ENCODE measurements at regions of chr1 and their contacts with region 1.

Region 1: DNA sequence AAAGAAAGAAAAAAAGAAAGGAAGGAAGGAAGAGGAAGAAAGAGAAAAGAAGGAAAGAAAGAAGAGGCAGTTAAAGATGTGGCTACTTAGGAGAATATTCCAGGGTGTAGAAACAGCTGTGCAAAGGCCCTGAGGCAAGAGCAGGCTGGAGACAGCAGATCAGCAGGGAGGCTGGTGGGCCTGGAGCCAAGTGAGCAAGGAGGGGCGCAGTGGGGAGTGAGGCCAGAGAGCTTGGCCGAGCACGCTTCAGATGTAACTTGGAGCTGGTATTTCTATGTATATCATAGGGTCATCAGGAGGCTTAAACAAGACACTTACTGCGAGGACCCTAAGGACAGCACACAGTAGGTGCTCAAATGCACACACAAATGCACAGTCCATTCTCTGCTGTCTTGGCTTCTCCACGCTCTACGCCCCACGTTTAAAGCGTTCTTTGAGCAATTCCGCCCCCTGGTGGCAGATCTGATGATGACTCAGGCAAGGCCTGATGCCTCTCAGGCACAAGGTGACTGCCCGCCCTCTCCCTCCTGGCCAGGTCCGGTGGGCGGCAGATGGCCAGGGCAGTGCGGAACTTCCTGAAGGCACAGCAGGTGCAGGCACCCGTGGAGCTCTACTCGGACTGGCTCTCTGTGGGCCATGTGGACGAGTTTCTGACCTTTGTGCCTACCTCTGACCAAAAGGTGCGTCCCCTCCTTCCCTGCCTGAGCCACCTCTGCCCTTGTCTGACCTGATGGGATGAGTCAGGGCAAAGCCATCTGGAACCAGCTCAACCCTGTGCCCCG is 11.9 kb upstream of the PADI3 start:
- H3K4me3 ChIP-seq: no peak overlapping the region
- H3K27ac ChIP-seq: no peak overlapping the region
- H3K4me1 ChIP-seq: peaks cover 14% of the 10 kb centered on the region
- CTCF ChIP-seq: peak; percentile 95

Region 2: GRCh38 chr1:17197696-17198095 is 39.3 kb before region 1 on chr1:
- CTCF ChIA-PET with region 1: no interaction called
- POLR2A ChIA-PET with region 1: no interaction called
- H3K4me3 ChIP-seq: no peak overlapping the region
- H3K27ac ChIP-seq: no peak overlapping the region
- H3K4me1 ChIP-seq: no peaks in the 10 kb centered on the region
- CTCF ChIP-seq: no peak

Region 3: GRCh38 chr1:17207966-17208418 is 29.0 kb before region 1 on chr1:
- CTCF ChIA-PET with region 1: interaction called, 9 read pairs
- POLR2A ChIA-PET with region 1: interaction called, 12 read pairs
- H3K4me3 ChIP-seq: no peak overlapping the region
- H3K27ac ChIP-seq: no peak overlapping the region
- H3K4me1 ChIP-seq: peaks cover 4% of the 10 kb centered on the region
- CTCF ChIP-seq: no peak

Region 4: DNA sequence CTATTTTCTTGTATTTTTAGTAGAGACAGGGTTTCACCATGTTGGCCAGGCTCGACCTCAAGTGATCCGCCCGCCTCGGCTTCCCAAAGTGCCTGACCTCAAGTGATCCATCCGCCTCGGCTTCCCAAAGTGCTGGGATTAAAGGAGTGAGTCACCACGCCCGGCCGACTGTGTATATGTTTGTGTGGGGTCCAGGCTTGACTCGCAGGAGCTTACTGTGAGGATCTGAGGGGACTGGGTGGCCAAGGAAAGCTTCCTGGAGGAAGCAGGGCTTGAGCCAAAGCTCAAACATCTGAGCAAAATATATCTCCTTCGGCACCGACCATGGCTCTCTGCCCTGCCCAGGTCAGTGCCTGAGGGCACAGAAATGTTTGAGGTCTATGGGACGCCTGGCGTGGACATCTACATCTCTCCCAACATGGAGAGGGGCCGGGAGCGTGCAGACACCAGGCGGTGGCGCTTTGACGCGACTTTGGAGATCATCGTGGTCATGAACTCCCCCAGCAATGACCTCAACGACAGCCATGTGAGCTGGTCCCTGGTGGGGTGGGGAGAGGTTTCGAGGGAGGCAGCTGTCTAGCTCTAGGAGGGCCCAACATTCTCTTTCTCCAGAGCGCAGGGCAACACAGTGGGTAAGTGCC is 22.4 kb after region 1 on chr1:
- CTCF ChIA-PET with region 1: interaction called, 13 read pairs
- POLR2A ChIA-PET with region 1: no interaction called
- H3K4me3 ChIP-seq: no peak overlapping the region
- H3K27ac ChIP-seq: no peak overlapping the region
- H3K4me1 ChIP-seq: no peaks in the 10 kb centered on the region
- CTCF ChIP-seq: no peak

Region 5: GRCh38 chr1:17274186-17275170 is 37.5 kb after region 1 on chr1:
- CTCF ChIA-PET with region 1: interaction called, 10 read pairs
- POLR2A ChIA-PET with region 1: no interaction called
- H3K4me3 ChIP-seq: no peak overlapping the region
- H3K27ac ChIP-seq: no peak overlapping the region
- H3K4me1 ChIP-seq: no peaks in the 10 kb centered on the region
- CTCF ChIP-seq: peak; percentile 75

Region 6: GRCh38 chr1:17304151-17304825 is 67.3 kb after region 1 on chr1:
- CTCF ChIA-PET with region 1: no interaction called
- POLR2A ChIA-PET with region 1: no interaction called
- H3K4me3 ChIP-seq: no peak overlapping the region
- H3K27ac ChIP-seq: no peak overlapping the region
- H3K4me1 ChIP-seq: no peaks in the 10 kb centered on the region
- CTCF ChIP-seq: no peak

Region 7: DNA sequence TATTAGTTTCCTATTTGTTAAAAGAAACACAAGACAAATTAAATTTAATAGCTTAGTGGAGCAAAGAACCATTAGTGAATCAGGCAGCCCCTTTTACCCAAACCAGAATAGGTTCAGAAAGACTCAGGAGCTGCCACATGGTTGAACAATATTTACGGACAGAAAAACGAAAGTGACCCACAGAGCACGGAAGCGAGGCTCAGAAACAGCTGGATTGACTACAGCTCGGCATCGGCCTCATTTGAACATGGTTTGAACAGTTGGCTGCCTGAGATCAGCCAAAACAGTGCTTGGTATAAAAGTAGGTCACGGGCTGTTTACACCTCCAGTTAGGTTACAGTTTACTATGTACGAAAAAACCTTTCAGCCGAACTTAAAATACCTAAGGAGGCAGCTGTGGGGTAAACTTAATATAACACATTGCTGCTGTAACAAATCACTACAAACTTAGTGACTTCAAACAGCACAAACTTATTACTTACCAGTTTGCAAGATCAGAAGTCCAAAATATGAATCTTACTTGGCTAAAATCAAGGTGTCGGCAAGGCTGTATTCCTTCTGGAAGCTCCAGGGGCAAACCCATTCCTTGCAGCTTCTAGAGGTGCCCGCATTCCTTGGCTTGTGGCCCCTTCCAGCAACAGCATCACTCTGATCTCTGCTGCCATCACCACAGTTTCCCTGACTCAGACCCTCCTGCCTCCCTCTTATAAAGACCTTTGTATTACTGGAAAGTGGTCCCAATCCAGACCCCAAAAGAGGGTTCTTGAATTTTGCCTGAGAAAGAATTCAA is 82.8 kb after region 1 on chr1:
- CTCF ChIA-PET with region 1: no interaction called
- POLR2A ChIA-PET with region 1: no interaction called
- H3K4me3 ChIP-seq: no peak overlapping the region
- H3K27ac ChIP-seq: no peak overlapping the region
- H3K4me1 ChIP-seq: no peaks in the 10 kb centered on the region
- CTCF ChIP-seq: no peak